Caco-2 (cell line): ENCODE measurements at regions of chr2 and their contacts with region 1.

Region 1: DNA sequence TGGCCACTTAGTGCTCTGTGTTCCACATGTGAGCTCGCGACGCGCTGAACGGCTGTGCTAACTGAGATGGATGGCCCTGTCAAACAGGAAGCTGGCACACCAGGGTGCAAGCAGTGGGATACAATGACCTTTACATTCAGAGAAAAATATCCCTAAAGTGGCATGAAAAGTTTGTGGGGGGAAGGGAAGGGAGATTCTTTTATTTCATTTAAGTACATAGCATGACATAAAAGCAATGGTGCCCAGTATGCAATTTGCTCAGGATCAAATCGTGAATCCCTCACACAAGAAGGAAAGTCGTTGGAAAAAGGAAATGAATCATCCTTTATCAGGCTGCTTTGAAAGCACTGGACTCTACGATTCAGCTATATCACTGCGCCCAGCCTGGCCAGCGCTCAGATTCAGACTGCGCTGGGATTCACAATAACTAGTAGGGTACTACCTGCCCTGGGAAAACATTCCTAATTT is 26.0 kb downstream of the SATB2 start:
- DNase-seq: no peak
- H3K4me3 ChIP-seq: no peak overlapping the region
- H3K4me3 Mint-ChIP-seq: no peak overlapping the region
- H3K27ac Mint-ChIP-seq: no peak overlapping the region
- H3K4me1 ChIP-seq: no peaks in the 10 kb centered on the region
- H3K4me1 Mint-ChIP-seq: no peaks in the 10 kb centered on the region
- H3K27me3 ChIP-seq: no peaks in the 10 kb centered on the region
- H3K27me3 Mint-ChIP-seq: no peaks in the 10 kb centered on the region
- CTCF ChIP-seq: no peak

Region 2: GRCh38 chr2:199392363-199392762 is 39.4 kb before region 1 on chr2:
- CTCF ChIA-PET with region 1: no interaction called
- POLR2A ChIA-PET with region 1: no interaction called
- intact Hi-C with region 1: no loop called
- DNase-seq: no peak
- H3K4me3 ChIP-seq: no peak overlapping the region
- H3K4me3 Mint-ChIP-seq: no peak overlapping the region
- H3K27ac Mint-ChIP-seq: no peak overlapping the region
- H3K4me1 ChIP-seq: no peaks in the 10 kb centered on the region
- H3K4me1 Mint-ChIP-seq: no peaks in the 10 kb centered on the region
- H3K27me3 ChIP-seq: no peaks in the 10 kb centered on the region
- H3K27me3 Mint-ChIP-seq: no peaks in the 10 kb centered on the region
- CTCF ChIP-seq: no peak

Region 3: DNA sequence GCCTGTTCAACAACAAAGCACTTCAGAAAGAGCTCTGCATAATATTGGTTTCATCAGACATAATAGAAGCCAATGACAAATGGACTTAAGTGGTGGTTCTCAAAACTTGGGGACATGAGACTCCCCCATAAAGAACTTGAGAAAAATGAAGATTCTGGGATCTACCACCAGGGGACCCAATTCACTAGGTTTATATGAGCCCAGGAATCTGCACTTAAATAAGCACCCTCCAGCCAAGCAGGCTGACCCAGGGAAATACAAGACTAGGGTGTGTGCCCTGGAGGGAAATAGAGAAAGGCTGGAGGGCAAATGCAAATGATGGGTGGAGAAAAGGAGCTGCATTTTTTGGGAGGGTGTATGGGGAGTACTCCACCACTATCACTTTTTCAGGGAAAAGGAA is 26.5 kb before region 1 on chr2:
- CTCF ChIA-PET with region 1: interaction called, 3 read pairs
- POLR2A ChIA-PET with region 1: no interaction called
- intact Hi-C with region 1: loop called (anchors 2 kb)
- DNase-seq: no peak
- H3K4me3 ChIP-seq: no peak overlapping the region
- H3K4me3 Mint-ChIP-seq: no peak overlapping the region
- H3K27ac Mint-ChIP-seq: no peak overlapping the region
- H3K4me1 ChIP-seq: no peaks in the 10 kb centered on the region
- H3K4me1 Mint-ChIP-seq: no peaks in the 10 kb centered on the region
- H3K27me3 ChIP-seq: no peaks in the 10 kb centered on the region
- H3K27me3 Mint-ChIP-seq: peaks cover 4% of the 10 kb centered on the region
- CTCF ChIP-seq: peak; percentile 13 to 34